Endothelial cell of umbilical vein (primary cell): ENCODE measurements at regions of chr13 and their contacts with region 1.

Region 1: GRCh38 chr13:110161112-110161882 is 145.7 kb downstream of the COL4A1 start:
- DNase-seq: no peak
- H3K4me3 ChIP-seq: no peak overlapping the region
- H3K27ac ChIP-seq: no peak overlapping the region
- H3K4me1 ChIP-seq: peaks cover 3% of the 10 kb centered on the region
- H3K27me3 ChIP-seq: no peaks in the 10 kb centered on the region
- CTCF ChIP-seq: no peak
- POLR2A ChIP-seq: no peak

Region 2: DNA sequence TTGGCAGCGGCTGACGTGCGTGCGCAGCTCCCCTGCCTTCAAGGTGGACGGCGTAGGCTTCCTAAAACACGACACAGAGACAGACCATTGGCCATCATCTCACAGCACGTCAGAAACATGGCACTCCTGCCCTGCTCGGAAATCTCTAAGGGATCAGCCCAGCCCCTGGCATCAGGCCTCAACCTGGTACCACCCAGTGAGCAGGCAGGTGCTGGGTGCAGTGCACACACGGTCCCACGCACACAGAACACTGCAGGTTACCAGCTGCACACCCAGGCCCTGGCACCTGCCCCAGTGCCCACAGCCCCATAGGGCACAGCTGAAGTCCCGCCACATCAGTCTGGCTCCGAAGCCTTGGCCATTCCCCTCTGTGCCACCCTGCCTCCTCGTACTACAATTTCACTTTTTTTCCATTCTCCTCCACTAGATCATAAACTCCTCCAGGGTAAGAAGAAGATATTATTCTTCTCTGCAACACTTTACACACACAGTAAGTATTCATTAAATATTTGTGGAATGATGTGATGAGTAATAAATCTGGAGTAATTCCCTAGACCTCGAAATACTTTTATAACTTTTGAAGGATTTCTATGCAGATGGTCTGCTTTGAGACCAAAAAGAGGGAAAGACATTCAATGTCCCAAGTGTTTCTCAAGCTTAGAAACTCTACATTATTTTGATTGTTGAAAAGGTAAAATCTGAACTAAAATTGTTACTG is 10.8 kb before region 1 on chr13:
- CTCF ChIA-PET with region 1: interaction called, 11 read pairs
- POLR2A ChIA-PET with region 1: no interaction called
- dilution Hi-C with region 1: no loop called
- intact Hi-C with region 1: no loop called
- DNase-seq: no peak
- H3K4me3 ChIP-seq: no peak overlapping the region
- H3K27ac ChIP-seq: no peak overlapping the region
- H3K4me1 ChIP-seq: no peaks in the 10 kb centered on the region
- H3K27me3 ChIP-seq: no peaks in the 10 kb centered on the region
- CTCF ChIP-seq: no peak
- POLR2A ChIP-seq: no peak

Region 3: GRCh38 chr13:110173247-110173818 is 12.0 kb after region 1 on chr13:
- CTCF ChIA-PET with region 1: no interaction called
- POLR2A ChIA-PET with region 1: no interaction called
- dilution Hi-C with region 1: no loop called
- intact Hi-C with region 1: no loop called
- DNase-seq: no peak
- H3K4me3 ChIP-seq: no peak overlapping the region
- H3K27ac ChIP-seq: no peak overlapping the region
- H3K4me1 ChIP-seq: no peaks in the 10 kb centered on the region
- H3K27me3 ChIP-seq: no peaks in the 10 kb centered on the region
- CTCF ChIP-seq: no peak
- POLR2A ChIP-seq: no peak

Region 4: GRCh38 chr13:110197046-110197445 is 35.7 kb after region 1 on chr13:
- CTCF ChIA-PET with region 1: no interaction called
- POLR2A ChIA-PET with region 1: no interaction called
- dilution Hi-C with region 1: no loop called
- intact Hi-C with region 1: loop called (anchors 1 kb)
- DNase-seq: no peak
- H3K4me3 ChIP-seq: no peak overlapping the region
- H3K27ac ChIP-seq: no peak overlapping the region
- H3K4me1 ChIP-seq: no peaks in the 10 kb centered on the region
- H3K27me3 ChIP-seq: no peaks in the 10 kb centered on the region
- CTCF ChIP-seq: no peak
- POLR2A ChIP-seq: no peak